Psoas muscle (tissue), 8 donors: ENCODE measurements at regions of chr9 and their contacts with region 1.

Region 1: DNA sequence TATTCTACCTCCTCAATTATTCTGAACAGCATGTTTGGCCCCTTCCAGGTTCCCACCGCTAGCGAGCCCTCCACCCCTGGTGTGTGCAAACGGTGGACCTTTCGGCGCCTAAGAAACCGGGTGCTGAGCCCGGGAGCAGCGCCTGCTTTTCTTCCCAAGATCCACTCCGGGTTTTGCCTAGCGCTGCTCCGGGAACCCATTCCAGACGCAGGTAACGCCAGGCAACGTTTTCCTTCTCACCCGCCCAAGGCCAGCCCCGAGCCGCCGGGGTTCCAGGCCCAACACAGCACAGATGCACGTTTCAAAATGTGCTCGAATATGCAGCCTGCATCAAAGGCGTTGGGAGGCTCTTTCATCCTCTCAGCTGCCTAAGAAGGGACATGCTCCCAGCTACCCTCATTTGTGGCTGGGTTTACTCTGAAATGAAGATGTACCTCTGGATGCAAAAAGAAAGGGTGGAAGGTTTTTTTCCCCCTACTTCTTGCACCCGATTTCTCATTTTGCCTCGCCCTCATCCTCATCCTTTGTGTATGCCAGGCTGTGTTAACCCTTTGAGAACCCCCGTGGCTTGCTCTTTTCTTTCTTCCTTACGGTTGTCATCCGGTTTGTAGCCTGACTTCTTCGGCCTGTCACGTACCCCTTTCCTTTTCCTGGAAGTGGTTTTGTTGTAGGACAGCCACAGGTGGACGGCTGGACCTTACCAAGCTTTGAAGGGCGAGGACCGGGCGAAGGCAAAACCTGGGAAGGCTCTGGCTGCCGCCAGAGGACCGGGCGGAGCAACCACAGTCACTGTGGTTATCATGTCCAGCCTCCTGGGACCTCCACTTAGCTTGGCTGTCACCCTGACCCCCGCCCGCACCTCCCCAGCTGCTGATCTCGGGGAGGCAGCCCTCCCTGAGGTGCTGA is 226.9 kb downstream of the SMARCA2 start:
- DNase-seq: peak; percentile 76 to 83
- ATAC-seq: peak; percentile 88 to 97 (median 95)
- H3K4me3 ChIP-seq: peak overlapping the region; percentile 69
- H3K27ac ChIP-seq: peak overlapping the region; percentile 56
- H3K4me1 ChIP-seq: no peaks in the 10 kb centered on the region
- H3K27me3 ChIP-seq: no peaks in the 10 kb centered on the region
- CTCF ChIP-seq: no peak

Region 2: GRCh38 chr9:2158111-2158610 is 83.9 kb before region 1 on chr9:
- intact Hi-C with region 1: loop called in 1 of 2 experiments (anchors 10 kb)
- DNase-seq: peak; percentile 40 to 59
- ATAC-seq: peak; percentile 57 to 69 (median 64)
- H3K4me3 ChIP-seq: peak overlapping the region; percentile 72
- H3K27ac ChIP-seq: peak overlapping the region; percentile 83
- H3K4me1 ChIP-seq: peaks cover 24% of the 10 kb centered on the region
- H3K27me3 ChIP-seq: no peaks in the 10 kb centered on the region
- CTCF ChIP-seq: no peak

Region 3: GRCh38 chr9:2276296-2276695 is 34.2 kb after region 1 on chr9:
- intact Hi-C with region 1: loop called in 1 of 2 experiments (anchors 5 kb)
- DNase-seq: no peak
- ATAC-seq: no peak
- H3K4me3 ChIP-seq: no peak overlapping the region
- H3K27ac ChIP-seq: no peak overlapping the region
- H3K4me1 ChIP-seq: no peaks in the 10 kb centered on the region
- H3K27me3 ChIP-seq: no peaks in the 10 kb centered on the region
- CTCF ChIP-seq: no peak